Activated CD4-positive, alpha-beta T cell treated with anti-CD3 and anti-CD28 coated beads for 36 hours (primary cell): ENCODE measurements at regions of chr3 and their contacts with region 1.

Region 1: DNA sequence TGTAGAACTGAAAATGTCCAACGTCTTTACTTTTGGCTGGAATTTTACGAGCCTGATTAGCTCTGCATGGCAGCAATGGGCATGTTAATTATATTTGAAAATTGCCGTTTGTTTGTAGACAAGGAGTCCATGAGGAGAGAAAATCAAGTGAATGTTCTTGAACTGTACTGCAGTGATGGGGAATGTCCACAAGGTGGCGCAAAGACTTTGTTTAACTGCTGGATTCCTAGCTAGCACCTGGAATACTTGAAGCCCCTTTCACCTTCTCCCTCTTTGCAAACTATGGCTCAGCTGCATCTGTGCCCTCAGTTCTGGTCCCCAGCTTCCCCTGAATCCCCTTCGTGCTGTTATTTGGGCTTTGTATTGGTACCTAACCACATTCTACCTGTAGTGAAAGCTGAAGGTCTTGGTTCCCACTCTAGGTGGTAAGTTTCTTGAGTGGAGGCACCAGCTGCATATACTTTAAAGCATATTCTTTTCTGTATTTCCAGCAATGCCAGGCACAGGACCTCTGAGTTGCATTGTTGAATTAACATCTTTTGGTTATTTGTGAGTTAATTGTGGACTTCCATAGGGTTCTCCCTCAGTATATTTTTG is 25.3 kb downstream of the EXOG start:
- DNase-seq: peak; percentile 75
- ATAC-seq: peak; percentile 74
- H3K4me3 Mint-ChIP-seq: no peak overlapping the region
- H3K27ac Mint-ChIP-seq: no peak overlapping the region
- H3K4me1 Mint-ChIP-seq: peaks cover 23% of the 10 kb centered on the region
- H3K27me3 Mint-ChIP-seq: no peaks in the 10 kb centered on the region

Region 2: DNA sequence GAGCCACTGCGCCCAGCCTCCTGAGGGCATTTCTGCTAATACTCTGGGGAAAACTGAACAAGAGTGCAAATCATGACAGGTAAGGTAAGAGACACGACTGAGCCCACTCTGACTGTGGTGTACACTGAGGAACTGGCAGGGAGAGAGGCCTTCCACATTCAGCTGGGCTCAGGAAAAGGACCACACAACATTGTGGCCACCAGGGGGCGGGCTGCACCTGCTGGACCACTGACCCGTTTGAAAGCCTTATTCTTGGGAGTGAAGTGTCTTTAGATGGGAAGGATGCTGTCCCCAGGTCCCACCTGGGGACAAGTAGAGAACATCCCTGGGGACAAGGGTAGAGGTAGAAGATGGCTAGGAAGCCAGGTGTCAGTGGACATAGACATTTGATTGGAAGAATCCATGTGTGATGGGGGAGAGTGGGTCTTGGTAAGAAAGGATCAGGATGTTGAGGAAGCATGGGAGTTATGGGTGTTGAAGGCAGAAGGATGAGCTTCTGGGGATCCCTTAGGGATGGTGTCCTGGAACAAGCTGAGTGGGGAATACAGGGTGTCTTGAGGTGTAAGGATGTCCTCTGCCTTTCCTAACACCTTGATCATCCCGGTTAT is 666.0 kb before region 1 on chr3:
- CTCF ChIA-PET with region 1: no interaction called
- POLR2A ChIA-PET with region 1: no interaction called
- intact Hi-C with region 1: no loop called
- DNase-seq: peak; percentile 89
- ATAC-seq: peak; percentile 65
- H3K4me3 Mint-ChIP-seq: no peak overlapping the region
- H3K27ac Mint-ChIP-seq: no peak overlapping the region
- H3K4me1 Mint-ChIP-seq: peaks cover 6% of the 10 kb centered on the region
- H3K27me3 Mint-ChIP-seq: no peaks in the 10 kb centered on the region

Region 3: DNA sequence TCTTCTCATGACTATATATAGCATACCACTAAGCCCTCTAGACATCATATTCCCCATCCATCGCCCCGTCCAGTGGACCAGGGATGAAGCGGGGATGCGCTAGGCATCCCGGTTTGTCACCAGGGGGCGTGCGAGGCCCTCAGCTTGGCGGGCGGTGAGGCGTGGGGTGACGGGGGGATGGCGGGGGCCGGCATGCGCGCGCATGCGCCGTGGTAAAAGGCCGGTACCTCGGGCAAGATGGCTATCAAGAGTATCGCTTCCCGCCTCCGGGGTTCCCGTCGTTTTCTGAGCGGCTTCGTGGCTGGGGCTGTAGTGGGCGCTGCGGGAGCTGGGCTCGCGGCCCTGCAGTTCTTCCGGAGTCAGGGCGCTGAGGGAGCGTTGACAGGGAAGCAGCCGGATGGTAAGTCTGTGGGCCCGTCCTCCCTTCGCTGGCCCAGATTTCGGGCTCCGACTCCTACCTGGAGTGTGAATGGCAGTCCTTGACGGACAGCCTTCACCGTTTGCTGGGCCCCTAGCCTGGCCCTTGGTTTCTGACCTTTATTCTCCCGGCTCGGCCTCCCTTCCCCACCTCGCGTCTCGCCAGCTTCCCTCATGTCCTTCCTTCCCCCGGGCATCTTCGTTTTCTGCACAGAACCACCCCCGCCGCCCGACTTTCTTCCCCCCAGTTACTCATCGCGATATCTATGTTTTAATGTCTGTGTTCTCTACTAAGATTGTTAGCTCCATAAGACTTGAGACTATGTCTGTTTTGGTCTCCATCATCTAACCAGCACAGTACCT is 25.2 kb before region 1 on chr3 and contains the start of gene EXOG:
- CTCF ChIA-PET with region 1: interaction called, 35 read pairs
- POLR2A ChIA-PET with region 1: interaction called, 5 read pairs
- intact Hi-C with region 1: loop called in 1 of 2 experiments (anchors 1 kb)
- DNase-seq: peak; percentile 98
- ATAC-seq: peak; percentile 88
- H3K4me3 Mint-ChIP-seq: peak within 1 kb of the TSS; percentile 86
- H3K27ac Mint-ChIP-seq: peak within 1 kb of the TSS; percentile 92
- H3K4me1 Mint-ChIP-seq: peaks cover 18% of the 10 kb centered on the region
- H3K27me3 Mint-ChIP-seq: no peaks in the 10 kb centered on the region
- total RNA-seq, gene EXOG: 13.0 to 14.9 TPM

Region 4: GRCh38 chr3:38538773-38539353 is 17.4 kb after region 1 on chr3:
- CTCF ChIA-PET with region 1: interaction called, 11 read pairs
- POLR2A ChIA-PET with region 1: no interaction called
- intact Hi-C with region 1: no loop called
- DNase-seq: no peak
- ATAC-seq: no peak
- H3K4me3 Mint-ChIP-seq: no peak overlapping the region
- H3K27ac Mint-ChIP-seq: no peak overlapping the region
- H3K4me1 Mint-ChIP-seq: peaks cover 4% of the 10 kb centered on the region
- H3K27me3 Mint-ChIP-seq: no peaks in the 10 kb centered on the region

Region 5: DNA sequence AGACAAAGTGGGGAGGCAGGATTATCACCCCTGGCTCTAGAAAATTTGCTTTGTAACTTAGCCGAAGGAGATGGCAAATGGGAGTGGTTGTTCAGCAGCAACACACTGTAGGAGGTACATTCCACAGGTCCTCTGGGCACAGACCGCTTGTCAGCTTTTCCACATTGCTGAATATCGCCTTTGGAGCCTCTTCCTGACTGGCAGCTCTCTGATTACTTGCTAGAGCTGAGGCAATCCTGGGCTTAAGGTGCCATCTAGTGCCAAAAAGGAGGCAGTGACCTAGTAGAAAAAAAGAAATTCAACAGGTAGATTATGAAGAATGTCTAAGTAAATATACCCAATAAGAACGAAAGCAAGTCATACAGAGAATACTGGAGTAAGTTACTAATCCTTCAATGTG is 141.1 kb after region 1 on chr3:
- CTCF ChIA-PET with region 1: interaction called, 29 read pairs
- POLR2A ChIA-PET with region 1: no interaction called
- intact Hi-C with region 1: no loop called
- DNase-seq: no peak
- ATAC-seq: no peak
- H3K4me3 Mint-ChIP-seq: no peak overlapping the region
- H3K27ac Mint-ChIP-seq: no peak overlapping the region
- H3K4me1 Mint-ChIP-seq: no peaks in the 10 kb centered on the region
- H3K27me3 Mint-ChIP-seq: peaks cover 24% of the 10 kb centered on the region

Region 6: DNA sequence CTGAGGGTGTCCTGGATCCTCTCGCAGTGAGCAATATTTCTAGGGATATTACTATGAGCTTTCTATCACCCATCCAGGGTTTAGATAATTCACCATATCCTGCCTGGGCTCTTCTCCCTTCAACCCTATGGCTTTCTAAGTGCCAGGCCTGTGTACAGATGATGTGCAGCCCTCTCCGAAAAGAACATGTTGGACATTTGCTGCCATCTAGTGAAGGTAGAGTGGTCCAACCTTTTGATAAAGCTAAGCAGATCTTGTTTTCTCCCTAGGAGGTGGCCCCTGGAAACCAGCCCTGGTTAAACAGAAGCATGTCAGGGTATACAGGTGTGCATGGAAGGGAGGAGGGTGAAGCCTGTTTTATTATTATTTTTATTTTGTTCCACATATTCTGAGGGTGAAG is 322.4 kb after region 1 on chr3:
- CTCF ChIA-PET with region 1: interaction called, 10 read pairs
- POLR2A ChIA-PET with region 1: interaction called, 3 read pairs
- intact Hi-C with region 1: loop called (anchors 1 to 10 kb)
- DNase-seq: no peak
- ATAC-seq: peak; percentile 72
- H3K4me3 Mint-ChIP-seq: no peak overlapping the region
- H3K27ac Mint-ChIP-seq: no peak overlapping the region
- H3K4me1 Mint-ChIP-seq: no peaks in the 10 kb centered on the region
- H3K27me3 Mint-ChIP-seq: peaks cover 21% of the 10 kb centered on the region